Naive thymus-derived CD4-positive, alpha-beta T cell (primary cell): ENCODE measurements at regions of chr1 and their contacts with region 1.

Region 1: DNA sequence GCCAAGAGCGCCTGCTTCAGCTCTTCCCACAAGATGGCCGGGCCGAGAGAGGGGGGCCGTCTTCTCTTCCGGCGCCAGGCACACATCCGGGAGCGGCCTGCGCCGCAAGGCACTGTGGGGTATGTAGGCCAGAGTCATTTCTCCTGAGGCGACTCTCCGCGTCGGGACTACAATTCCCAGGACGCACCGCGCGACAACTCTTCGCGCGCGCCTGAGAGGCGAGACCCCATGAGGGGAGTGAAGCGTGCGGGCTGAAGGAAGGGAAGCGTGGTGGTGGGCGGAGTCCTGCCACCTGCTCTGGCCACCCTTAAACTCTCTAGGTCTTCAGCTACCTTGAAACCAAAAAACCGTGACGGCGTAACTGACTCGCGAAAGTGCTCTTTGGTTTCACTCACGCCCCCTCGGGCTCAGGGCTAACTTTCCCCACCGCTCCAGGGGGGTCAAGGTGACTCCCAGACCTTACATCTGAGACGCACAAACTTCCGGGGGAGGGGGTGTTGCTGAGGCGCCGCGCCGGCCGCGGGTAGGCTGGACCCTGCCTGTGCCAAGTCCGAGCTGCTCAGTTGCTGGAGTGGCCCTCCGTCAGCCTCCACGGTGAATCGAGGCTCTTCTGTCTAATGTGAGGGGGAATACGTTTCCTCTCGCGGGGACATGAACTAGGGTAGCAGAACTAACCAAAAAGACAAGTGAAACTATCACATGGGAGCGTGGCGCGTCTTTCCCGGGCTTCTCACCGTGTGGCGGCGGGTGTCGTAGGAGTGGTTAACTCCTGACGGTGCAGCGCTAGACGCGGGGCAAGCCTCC is at the start of gene SERBP1:
- DNase-seq: peak; percentile 86 to 97 (median 94)
- ATAC-seq: peak; percentile 94
- H3K4me3 ChIP-seq: peak within 1 kb of the TSS; percentile 98
- H3K4me3 Mint-ChIP-seq: peak within 1 kb of the TSS; percentile 93 to 99 (median 95)
- H3K27ac ChIP-seq: peak within 1 kb of the TSS; percentile 96
- H3K27ac Mint-ChIP-seq: peak within 1 kb of the TSS; percentile 95 to 99 (median 96)
- H3K4me1 ChIP-seq: peaks cover 5 to 16% of the 10 kb centered on the region in 2 donors
- H3K4me1 Mint-ChIP-seq: peaks cover 28 to 64% (median 57%) of the 10 kb centered on the region in 7 donors
- H3K27me3 ChIP-seq: no peaks in the 10 kb centered on the region
- H3K27me3 Mint-ChIP-seq: no peaks in the 10 kb centered on the region
- total RNA-seq, gene SERBP1: 108 to 282 (median 151) TPM

Region 2: GRCh38 chr1:66764994-66765578 is 665.5 kb before region 1 on chr1:
- CTCF ChIA-PET with region 1: no interaction called
- POLR2A ChIA-PET with region 1: no interaction called
- intact Hi-C with region 1: loop called in 1 of 2 experiments (anchors 2 kb)
- DNase-seq: peak in 7 of 9 donors; percentile 48 to 68 (median 62)
- ATAC-seq: peak; percentile 81
- H3K4me3 ChIP-seq: no peak overlapping the region
- H3K4me3 Mint-ChIP-seq: no peak overlapping the region
- H3K27ac ChIP-seq: no peak overlapping the region
- H3K27ac Mint-ChIP-seq: no peak overlapping the region
- H3K4me1 ChIP-seq: no peaks in the 10 kb centered on the region
- H3K4me1 Mint-ChIP-seq: peaks cover 7 to 21% (median 15%) of the 10 kb centered on the region in 7 donors
- H3K27me3 ChIP-seq: no peaks in the 10 kb centered on the region
- H3K27me3 Mint-ChIP-seq: peaks cover 0 to 3% (median 0%) of the 10 kb centered on the region in 5 donors

Region 3: GRCh38 chr1:66981679-66982078 is 448.9 kb before region 1 on chr1:
- CTCF ChIA-PET with region 1: no interaction called
- POLR2A ChIA-PET with region 1: no interaction called
- intact Hi-C with region 1: loop called (anchors 5 kb)
- DNase-seq: peak in 7 of 9 donors; percentile 52 to 78 (median 69)
- ATAC-seq: peak; percentile 93
- H3K4me3 ChIP-seq: peak overlapping the region; percentile 22
- H3K4me3 Mint-ChIP-seq: peak overlapping the region; percentile 64 to 84 (median 80)
- H3K27ac ChIP-seq: peak overlapping the region; percentile 78
- H3K27ac Mint-ChIP-seq: peak overlapping the region; percentile 83 to 94 (median 93)
- H3K4me1 ChIP-seq: peaks cover 0 to 8% of the 10 kb centered on the region in 2 donors
- H3K4me1 Mint-ChIP-seq: peaks cover 6 to 48% (median 37%) of the 10 kb centered on the region in 7 donors
- H3K27me3 ChIP-seq: no peaks in the 10 kb centered on the region
- H3K27me3 Mint-ChIP-seq: no peaks in the 10 kb centered on the region

Region 4: DNA sequence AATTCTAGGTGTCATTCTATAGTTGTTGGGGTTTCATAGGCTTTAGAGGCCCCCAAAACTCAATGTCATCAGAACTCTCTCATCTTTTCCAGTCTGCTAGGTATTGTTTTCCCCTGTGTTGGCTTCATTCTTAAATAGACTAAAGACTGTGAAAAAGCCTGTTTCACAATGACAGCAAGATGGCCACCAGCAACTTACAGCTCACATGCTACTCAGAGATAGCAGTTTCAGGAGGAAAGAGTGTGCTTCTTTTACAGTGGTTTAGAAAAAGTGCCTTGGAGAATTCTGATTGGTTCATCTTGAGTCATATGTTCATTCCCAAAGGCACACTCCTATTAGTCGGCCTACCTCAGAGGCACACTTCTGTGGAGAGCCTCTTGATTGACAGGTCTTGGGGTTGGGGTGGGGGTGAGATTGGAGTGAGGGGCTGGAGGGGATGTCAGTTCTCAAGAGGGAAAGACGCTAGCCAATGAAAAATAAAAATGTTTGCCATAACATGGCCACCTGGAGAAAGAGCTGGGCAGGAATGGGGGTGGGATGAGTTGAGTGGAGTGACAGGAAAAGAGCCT is 255.8 kb before region 1 on chr1:
- CTCF ChIA-PET with region 1: no interaction called
- POLR2A ChIA-PET with region 1: interaction called, 5 read pairs
- intact Hi-C with region 1: loop called (anchors 1 to 2 kb)
- DNase-seq: no peak
- ATAC-seq: no peak
- H3K4me3 ChIP-seq: no peak overlapping the region
- H3K4me3 Mint-ChIP-seq: peak overlapping the region in 1 of 10 donors; percentile 15
- H3K27ac ChIP-seq: no peak overlapping the region
- H3K27ac Mint-ChIP-seq: peak overlapping the region in 1 of 9 donors; percentile 60
- H3K4me1 ChIP-seq: peaks cover 29 to 32% of the 10 kb centered on the region in 2 donors
- H3K4me1 Mint-ChIP-seq: peaks cover 43 to 66% (median 53%) of the 10 kb centered on the region in 7 donors
- H3K27me3 ChIP-seq: no peaks in the 10 kb centered on the region
- H3K27me3 Mint-ChIP-seq: peaks cover 0 to 4% (median 0%) of the 10 kb centered on the region in 5 donors

Region 5: DNA sequence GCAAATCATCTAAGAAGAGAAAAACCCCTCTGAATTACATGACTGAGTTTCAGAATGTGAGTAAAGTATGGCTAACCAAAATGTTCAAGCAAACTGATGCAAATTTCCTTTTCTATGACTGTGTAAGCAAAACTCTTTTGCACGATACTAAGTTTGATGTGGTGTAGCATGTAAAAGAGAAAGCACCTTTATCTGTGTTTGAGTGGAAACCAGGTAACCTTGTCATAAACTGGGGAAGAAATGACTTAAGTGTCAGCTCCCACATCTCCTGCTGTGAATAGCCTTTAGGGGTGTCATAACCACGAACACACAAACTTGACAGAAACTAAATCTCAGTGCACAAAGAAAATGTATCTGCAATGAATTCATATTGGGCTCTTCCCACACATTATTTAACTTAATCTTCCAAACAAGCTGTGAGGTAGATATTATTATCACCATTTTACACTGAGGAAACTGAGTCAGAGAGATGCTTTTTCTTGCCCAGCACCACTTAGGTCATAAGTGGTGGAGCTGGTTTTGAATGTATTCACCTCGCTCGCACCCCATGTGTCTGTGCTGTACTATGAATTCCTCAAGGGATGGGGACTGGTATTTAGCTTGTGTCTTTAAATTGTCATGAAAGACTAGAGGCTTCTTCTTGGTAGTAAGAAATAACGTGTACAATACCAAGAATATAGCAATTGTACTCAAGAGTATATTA is 155.8 kb before region 1 on chr1:
- CTCF ChIA-PET with region 1: no interaction called
- POLR2A ChIA-PET with region 1: no interaction called
- intact Hi-C with region 1: loop called in 1 of 2 experiments (anchors 1 kb)
- DNase-seq: peak in 3 of 9 donors; percentile 1 to 25 (median 24)
- ATAC-seq: peak; percentile 66
- H3K4me3 ChIP-seq: no peak overlapping the region
- H3K4me3 Mint-ChIP-seq: peak overlapping the region in 1 of 10 donors; percentile 58
- H3K27ac ChIP-seq: no peak overlapping the region
- H3K27ac Mint-ChIP-seq: peak overlapping the region in 2 of 9 donors; percentile 5 to 82
- H3K4me1 ChIP-seq: no peaks in the 10 kb centered on the region
- H3K4me1 Mint-ChIP-seq: peaks cover 0 to 30% (median 10%) of the 10 kb centered on the region in 7 donors
- H3K27me3 ChIP-seq: no peaks in the 10 kb centered on the region
- H3K27me3 Mint-ChIP-seq: no peaks in the 10 kb centered on the region

Region 6: DNA sequence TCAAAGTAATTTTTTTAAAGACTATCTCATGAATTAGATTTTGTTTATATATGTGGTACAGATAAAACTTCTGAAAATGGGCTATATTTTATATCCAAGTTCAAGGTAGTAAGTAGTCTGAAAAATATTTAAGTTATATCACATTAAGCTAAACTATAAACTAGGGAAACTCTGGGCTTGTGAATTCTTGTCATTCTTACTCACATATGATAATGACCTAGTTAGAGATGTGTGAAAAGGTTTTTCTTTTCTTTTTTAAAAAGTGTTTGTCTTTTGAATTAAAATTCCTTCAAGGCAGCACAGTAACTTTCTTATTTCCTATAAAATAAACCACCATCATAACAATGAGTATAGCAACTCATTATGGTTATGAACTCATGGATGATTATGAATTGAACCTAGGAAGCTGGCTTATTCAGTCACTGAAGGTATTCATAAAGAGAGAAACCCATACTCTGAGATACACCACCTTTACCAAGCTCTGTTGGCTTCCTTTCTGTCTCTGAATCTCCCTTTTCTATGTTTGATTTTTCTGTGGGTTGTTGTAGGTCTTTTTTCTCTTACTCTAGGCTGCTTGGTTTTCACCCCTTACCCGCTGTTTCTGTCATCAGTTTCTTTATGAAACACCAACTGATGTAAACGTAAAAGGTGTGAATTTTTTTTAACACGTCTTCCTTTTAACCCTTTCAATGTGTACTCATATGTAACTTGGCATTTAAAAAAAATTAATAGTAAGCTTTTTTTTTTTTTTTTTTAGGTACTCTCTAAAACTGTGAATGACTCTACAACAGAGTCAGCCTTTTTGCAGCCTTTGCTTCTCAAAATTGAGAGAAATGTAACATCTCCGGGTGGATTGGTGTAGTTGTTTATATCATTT is 97.7 kb before region 1 on chr1:
- CTCF ChIA-PET with region 1: no interaction called
- POLR2A ChIA-PET with region 1: interaction called, 4 read pairs
- intact Hi-C with region 1: loop called (anchors 2 to 5 kb)
- DNase-seq: peak in 5 of 9 donors; percentile 16 to 41 (median 33)
- ATAC-seq: peak; percentile 84
- H3K4me3 ChIP-seq: no peak overlapping the region
- H3K4me3 Mint-ChIP-seq: peak overlapping the region in 6 of 10 donors; percentile 0 to 51 (median 24)
- H3K27ac ChIP-seq: no peak overlapping the region
- H3K27ac Mint-ChIP-seq: peak overlapping the region; percentile 3 to 87 (median 23)
- H3K4me1 ChIP-seq: peaks cover 17 to 34% of the 10 kb centered on the region in 2 donors
- H3K4me1 Mint-ChIP-seq: peaks cover 19 to 73% (median 39%) of the 10 kb centered on the region in 7 donors
- H3K27me3 ChIP-seq: no peaks in the 10 kb centered on the region
- H3K27me3 Mint-ChIP-seq: no peaks in the 10 kb centered on the region

Region 7: GRCh38 chr1:67500413-67500959 is 69.9 kb after region 1 on chr1:
- CTCF ChIA-PET with region 1: interaction called, 4 read pairs
- POLR2A ChIA-PET with region 1: no interaction called
- intact Hi-C with region 1: loop called (anchors 1 kb)
- DNase-seq: peak; percentile 67 to 89 (median 81)
- ATAC-seq: peak; percentile 100
- H3K4me3 ChIP-seq: no peak overlapping the region
- H3K4me3 Mint-ChIP-seq: peak overlapping the region in 3 of 10 donors; percentile 26 to 56 (median 37)
- H3K27ac ChIP-seq: no peak overlapping the region
- H3K27ac Mint-ChIP-seq: peak overlapping the region in 1 of 9 donors; percentile 35
- H3K4me1 ChIP-seq: no peaks in the 10 kb centered on the region
- H3K4me1 Mint-ChIP-seq: peaks cover 0 to 5% (median 4%) of the 10 kb centered on the region in 7 donors
- H3K27me3 ChIP-seq: no peaks in the 10 kb centered on the region
- H3K27me3 Mint-ChIP-seq: peaks cover 0 to 11% (median 0%) of the 10 kb centered on the region in 5 donors